Heart right ventricle (tissue), 16 donors: ENCODE measurements at regions of chr15 and their contacts with region 1.

Region 1: DNA sequence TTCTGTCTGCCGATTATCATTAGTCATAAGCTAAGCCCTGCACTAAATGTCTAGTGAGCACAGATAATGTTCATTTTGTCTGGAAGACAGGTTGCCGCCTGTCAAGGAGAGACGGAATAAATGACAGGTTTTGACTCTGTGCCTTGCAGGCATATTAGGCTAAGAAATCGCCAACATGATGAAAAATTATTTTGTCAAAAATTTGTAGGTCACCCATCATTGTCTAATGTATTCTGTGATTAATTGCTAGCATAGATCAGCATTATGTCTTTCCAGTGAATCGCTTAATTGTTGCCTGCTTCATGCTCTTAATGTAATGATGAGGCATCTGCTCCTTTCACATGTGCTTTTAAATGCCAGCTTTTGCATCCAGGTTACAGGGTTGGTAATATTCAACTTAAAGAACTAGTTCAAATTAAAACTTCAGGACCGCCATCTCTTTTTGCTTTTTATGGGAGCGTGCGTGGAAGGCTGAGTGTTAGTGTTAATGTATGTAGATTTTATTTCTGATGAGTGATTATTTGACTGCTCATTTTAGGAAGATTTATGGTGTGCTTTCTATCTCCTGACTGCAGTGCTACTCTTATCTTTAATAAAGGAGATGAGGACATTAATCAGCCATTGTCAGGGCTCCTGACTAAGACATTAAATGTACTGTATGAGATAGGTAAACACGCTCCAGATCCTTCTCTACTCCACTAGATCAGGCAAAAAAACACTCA is 120.8 kb upstream of the MEIS2 start:
- DNase-seq: no peak
- ATAC-seq: no peak
- H3K4me3 ChIP-seq: no peak overlapping the region
- H3K27ac ChIP-seq: no peak overlapping the region
- H3K4me1 ChIP-seq: no peaks in the 10 kb centered on the region
- H3K27me3 ChIP-seq: no peaks in the 10 kb centered on the region
- CTCF ChIP-seq: no peak

Region 2: GRCh38 chr15:37204692-37205091 is 16.4 kb before region 1 on chr15:
- intact Hi-C with region 1: loop called in 1 of 10 experiments (anchors 1 kb)
- DNase-seq: no peak
- ATAC-seq: no peak
- H3K4me3 ChIP-seq: no peak overlapping the region
- H3K27ac ChIP-seq: no peak overlapping the region
- H3K4me1 ChIP-seq: no peaks in the 10 kb centered on the region
- H3K27me3 ChIP-seq: no peaks in the 10 kb centered on the region
- CTCF ChIP-seq: peak in 1 of 9 donors; percentile 19